Heart left ventricle (tissue), 16 donors: ENCODE measurements at regions of chr1 and their contacts with region 1.

Region 1: DNA sequence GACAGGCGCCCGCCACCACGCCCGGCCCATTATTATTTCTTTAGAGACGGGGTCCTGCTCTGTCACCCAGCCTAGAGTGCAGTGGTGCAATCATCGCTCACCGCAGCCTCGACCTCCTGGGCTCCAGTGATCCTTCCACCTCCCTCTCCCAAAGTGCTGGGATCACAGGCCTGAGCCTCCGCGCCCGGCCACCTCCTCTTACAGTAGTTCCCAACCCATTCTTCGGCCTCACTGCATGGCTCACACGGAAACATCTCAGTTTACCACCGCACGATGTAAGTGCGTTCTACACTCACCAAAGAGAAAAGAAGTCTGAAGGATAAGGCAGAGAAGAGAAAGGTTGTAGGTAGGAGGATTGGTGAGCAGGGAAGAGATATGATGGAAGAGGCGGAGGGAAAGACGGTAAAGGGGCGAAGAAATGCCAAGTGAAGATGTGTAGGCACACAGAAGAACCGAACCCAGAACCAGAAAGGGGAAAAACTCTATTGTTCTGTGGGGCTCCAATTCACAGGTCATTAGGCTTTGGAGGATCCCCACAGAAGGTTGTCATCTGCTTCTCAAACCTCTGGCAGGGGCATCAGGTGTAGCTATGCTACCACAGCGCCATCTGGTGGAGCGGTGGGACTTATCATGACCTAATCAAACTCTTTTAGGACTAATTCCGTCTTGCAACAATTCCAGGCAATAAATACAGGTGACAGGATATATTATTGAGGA is 504.2 kb downstream of the SMYD3 start:
- DNase-seq: peak; percentile 76 to 91 (median 85)
- ATAC-seq: peak in 3 of 4 donors; percentile 75 to 80 (median 77)
- H3K4me3 ChIP-seq: no peak overlapping the region
- H3K27ac ChIP-seq: no peak overlapping the region
- H3K4me1 ChIP-seq: peaks cover 0 to 9% (median 0%) of the 10 kb centered on the region in 12 donors
- H3K27me3 ChIP-seq: no peaks in the 10 kb centered on the region
- CTCF ChIP-seq: peak; percentile 77 to 95 (median 86)
- POLR2A ChIP-seq: no peak

Region 2: DNA sequence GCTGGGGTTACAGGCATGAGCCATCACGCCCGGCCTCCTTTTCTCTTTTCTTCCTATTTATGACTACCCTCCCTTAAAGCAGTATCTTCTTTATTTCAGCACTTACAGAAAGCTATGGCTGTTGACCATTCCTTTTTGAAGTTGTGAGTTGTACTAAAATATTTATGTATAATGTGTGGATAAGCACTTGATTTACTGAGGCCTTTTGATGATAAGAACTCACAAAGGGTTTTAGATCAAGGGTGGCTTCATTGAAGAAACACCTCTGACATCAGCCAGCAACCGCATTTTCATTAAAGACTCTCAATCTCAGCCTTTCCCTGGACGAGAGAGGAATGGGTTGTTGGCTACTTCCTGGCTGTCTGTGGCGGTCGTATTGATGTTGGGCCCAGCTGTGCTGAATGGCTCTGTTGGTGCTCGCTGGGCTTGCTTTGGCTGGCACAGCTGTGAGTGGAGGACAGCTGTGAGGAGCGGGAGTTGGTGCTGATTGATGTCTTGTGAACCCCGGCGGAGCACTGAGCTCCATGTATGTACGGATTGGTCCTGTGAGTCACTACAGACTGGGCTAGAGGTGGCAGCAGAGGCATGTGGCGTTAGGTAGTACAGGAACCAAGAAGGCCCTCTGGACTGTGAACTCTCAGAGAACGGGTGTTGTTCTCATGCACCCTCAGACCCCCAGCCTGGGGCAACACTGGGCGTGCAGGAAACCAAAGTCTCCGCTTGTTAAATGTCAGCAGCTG is 639.3 kb before region 1 on chr1:
- intact Hi-C with region 1: loop called in 1 of 10 experiments (anchors 10 kb)
- DNase-seq: no peak
- ATAC-seq: no peak
- H3K4me3 ChIP-seq: no peak overlapping the region
- H3K27ac ChIP-seq: no peak overlapping the region
- H3K4me1 ChIP-seq: no peaks in the 10 kb centered on the region
- H3K27me3 ChIP-seq: no peaks in the 10 kb centered on the region
- CTCF ChIP-seq: no peak
- POLR2A ChIP-seq: no peak

Region 3: DNA sequence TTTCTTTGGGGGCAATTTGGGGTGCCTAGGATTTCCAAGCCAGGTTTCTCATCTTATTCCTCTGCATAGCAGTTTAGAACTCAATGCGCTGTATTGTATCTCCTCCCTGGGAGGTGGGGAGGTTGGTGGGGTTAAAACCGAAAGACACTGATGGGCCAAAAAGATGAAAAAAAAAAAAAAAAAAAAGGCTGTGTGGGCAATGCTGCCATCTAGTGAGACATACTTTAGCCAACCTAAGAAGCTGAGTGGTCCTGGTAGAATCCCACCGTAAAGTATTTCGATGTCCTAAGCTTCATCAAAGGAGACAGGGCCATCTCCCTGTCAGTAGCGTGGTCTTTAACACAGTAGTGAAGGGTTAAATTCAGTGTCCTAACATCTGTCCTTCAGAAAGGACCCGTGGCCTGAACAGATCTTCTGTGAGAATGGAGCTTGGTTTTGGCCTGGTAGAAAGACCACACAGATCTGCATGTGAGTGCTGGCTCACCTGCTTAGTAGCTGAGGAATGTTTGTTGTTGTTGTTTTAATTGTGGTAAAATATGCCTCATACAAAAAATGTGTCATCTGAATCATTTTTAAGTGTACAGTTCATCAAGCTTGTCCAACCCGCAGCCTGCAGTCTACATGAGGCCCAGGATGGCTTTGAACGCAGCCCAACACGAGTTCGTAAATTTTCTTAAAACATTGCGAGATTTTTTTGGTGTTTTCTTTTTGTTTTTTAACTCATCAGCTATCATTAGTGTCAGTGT is 621.9 kb before region 1 on chr1:
- intact Hi-C with region 1: loop called in 4 of 10 experiments (anchors 2 to 10 kb)
- DNase-seq: no peak
- ATAC-seq: no peak
- H3K4me3 ChIP-seq: no peak overlapping the region
- H3K27ac ChIP-seq: no peak overlapping the region
- H3K4me1 ChIP-seq: no peaks in the 10 kb centered on the region
- H3K27me3 ChIP-seq: peaks cover 0 to 12% (median 0%) of the 10 kb centered on the region in 9 donors
- CTCF ChIP-seq: peak; percentile 11 to 56 (median 40)
- POLR2A ChIP-seq: no peak

Region 4: GRCh38 chr1:245822987-245823386 is 179.9 kb before region 1 on chr1:
- intact Hi-C with region 1: loop called in 8 of 10 experiments (anchors 1 to 10 kb)
- DNase-seq: no peak
- ATAC-seq: peak in 1 of 4 donors; percentile 64
- H3K4me3 ChIP-seq: no peak overlapping the region
- H3K27ac ChIP-seq: no peak overlapping the region
- H3K4me1 ChIP-seq: no peaks in the 10 kb centered on the region
- H3K27me3 ChIP-seq: no peaks in the 10 kb centered on the region
- CTCF ChIP-seq: no peak
- POLR2A ChIP-seq: no peak

Region 5: GRCh38 chr1:245874942-245875580 is 127.8 kb before region 1 on chr1:
- intact Hi-C with region 1: loop called in 3 of 10 experiments (anchors 5 to 10 kb)
- DNase-seq: peak; percentile 80 to 96 (median 88)
- ATAC-seq: peak; percentile 86 to 94 (median 90)
- H3K4me3 ChIP-seq: peak overlapping the region in 2 of 12 donors; percentile 13 to 19
- H3K27ac ChIP-seq: peak overlapping the region in 10 of 12 donors; percentile 20 to 70 (median 50)
- H3K4me1 ChIP-seq: peaks cover 0 to 41% (median 19%) of the 10 kb centered on the region in 12 donors
- H3K27me3 ChIP-seq: no peaks in the 10 kb centered on the region
- CTCF ChIP-seq: no peak
- POLR2A ChIP-seq: no peak

Region 6: GRCh38 chr1:246067432-246068216 is 64.7 kb after region 1 on chr1:
- intact Hi-C with region 1: no loop called
- DNase-seq: no peak
- ATAC-seq: peak in 1 of 4 donors; percentile 34
- H3K4me3 ChIP-seq: no peak overlapping the region
- H3K27ac ChIP-seq: no peak overlapping the region
- H3K4me1 ChIP-seq: peaks cover 0 to 5% (median 0%) of the 10 kb centered on the region in 12 donors
- H3K27me3 ChIP-seq: no peaks in the 10 kb centered on the region
- CTCF ChIP-seq: no peak
- POLR2A ChIP-seq: no peak